ENCODE measurements at regions of chr19 and their contacts with region 1.

Region 1: GRCh38 chr19:9857920-9858746 is 23.0 kb downstream of the PIN1 start:
- DNase-seq: peak in 7 of 9 donors; percentile 19 to 64 (median 57)
- ATAC-seq: peak; percentile 82
- H3K4me3 ChIP-seq: peak overlapping the region; percentile 70
- H3K4me3 Mint-ChIP-seq: peak overlapping the region; percentile 91 to 100 (median 96)
- H3K27ac ChIP-seq: peak overlapping the region; percentile 67
- H3K27ac Mint-ChIP-seq: peak overlapping the region; percentile 94 to 99 (median 98)
- H3K4me1 ChIP-seq: peaks cover 56 to 72% of the 10 kb centered on the region in 2 donors
- H3K4me1 Mint-ChIP-seq: peaks cover 48 to 96% (median 85%) of the 10 kb centered on the region in 7 donors
- H3K27me3 ChIP-seq: no peaks in the 10 kb centered on the region
- H3K27me3 Mint-ChIP-seq: no peaks in the 10 kb centered on the region

Region 2: GRCh38 chr19:9827289-9828238 is 30.6 kb before region 1 on chr19 and contains the start of gene UBL5:
- CTCF ChIA-PET with region 1: interaction called, 4 read pairs
- POLR2A ChIA-PET with region 1: interaction called, 11 read pairs
- intact Hi-C with region 1: no loop called
- DNase-seq: peak; percentile 72 to 91 (median 89)
- ATAC-seq: peak; percentile 98
- H3K4me3 ChIP-seq: peak within 1 kb of the TSS; percentile 97
- H3K4me3 Mint-ChIP-seq: peak within 1 kb of the TSS; percentile 90 to 100 (median 99)
- H3K27ac ChIP-seq: peak within 1 kb of the TSS; percentile 87
- H3K27ac Mint-ChIP-seq: peak within 1 kb of the TSS; percentile 83 to 99 (median 98)
- H3K4me1 ChIP-seq: peaks cover 14 to 16% of the 10 kb centered on the region in 2 donors
- H3K4me1 Mint-ChIP-seq: peaks cover 15 to 45% (median 27%) of the 10 kb centered on the region in 7 donors
- H3K27me3 ChIP-seq: no peaks in the 10 kb centered on the region
- H3K27me3 Mint-ChIP-seq: no peaks in the 10 kb centered on the region
- total RNA-seq, gene UBL5: 182 to 375 (median 198) TPM

Region 3: DNA sequence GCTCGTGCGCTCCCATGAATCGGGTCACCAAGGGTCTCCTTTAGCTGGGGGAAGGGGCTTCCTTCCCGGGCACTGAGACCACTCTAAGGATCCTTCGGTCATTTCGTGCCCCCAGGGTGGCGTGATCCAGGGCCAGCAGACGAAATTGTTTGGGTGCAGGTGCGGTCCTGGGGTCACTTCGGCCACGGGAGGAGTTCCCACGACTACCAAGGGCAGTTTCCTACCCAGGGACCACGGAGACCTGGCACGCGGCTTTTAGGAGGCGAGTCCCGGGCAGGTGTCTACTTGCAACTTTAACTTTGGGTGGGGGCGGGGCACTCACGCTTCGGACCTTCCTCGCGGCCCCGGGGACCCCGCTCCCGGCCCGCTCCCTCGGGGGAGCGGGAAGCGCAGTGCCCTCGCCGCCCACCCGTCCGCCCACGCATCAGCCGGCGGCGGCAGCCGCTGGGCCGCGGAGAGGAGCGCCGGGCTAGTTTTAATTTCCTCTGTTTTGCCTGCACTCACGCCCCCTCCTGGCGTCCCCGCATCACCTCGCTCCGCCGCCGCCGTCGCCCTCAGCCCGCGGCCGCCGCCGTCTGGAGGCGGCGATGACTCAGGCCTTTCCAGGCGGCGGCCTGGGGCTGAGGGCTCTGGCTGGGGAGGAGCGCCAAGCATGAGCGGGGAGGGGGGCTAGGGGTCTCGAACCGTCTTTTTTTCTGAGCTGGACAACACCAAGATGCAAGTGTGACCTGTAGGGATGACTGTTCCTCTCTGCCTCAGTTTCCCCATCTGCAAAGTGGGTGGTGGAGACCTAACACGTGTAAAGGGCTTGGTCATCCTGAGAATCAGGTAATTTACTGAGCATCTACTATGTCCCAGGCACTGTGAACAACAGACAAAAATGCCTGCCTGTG is 56.4 kb after region 1 on chr19:
- CTCF ChIA-PET with region 1: interaction called, 7 read pairs
- POLR2A ChIA-PET with region 1: interaction called, 3 read pairs
- intact Hi-C with region 1: loop called in 1 of 2 experiments (anchors 2 kb)
- DNase-seq: peak; percentile 59 to 83 (median 72)
- ATAC-seq: peak; percentile 95
- H3K4me3 ChIP-seq: peak overlapping the region; percentile 64
- H3K4me3 Mint-ChIP-seq: peak overlapping the region; percentile 66 to 86 (median 72)
- H3K27ac ChIP-seq: no peak overlapping the region
- H3K27ac Mint-ChIP-seq: no peak overlapping the region
- H3K4me1 ChIP-seq: peaks cover 3 to 5% of the 10 kb centered on the region in 2 donors
- H3K4me1 Mint-ChIP-seq: peaks cover 6 to 12% (median 9%) of the 10 kb centered on the region in 7 donors
- H3K27me3 ChIP-seq: peaks cover 0 to 13% of the 10 kb centered on the region in 2 donors
- H3K27me3 Mint-ChIP-seq: peaks cover 22 to 33% (median 27%) of the 10 kb centered on the region in 5 donors

Region 4: GRCh38 chr19:9996541-9996940 is 138.4 kb after region 1 on chr19:
- CTCF ChIA-PET with region 1: no interaction called
- POLR2A ChIA-PET with region 1: no interaction called
- intact Hi-C with region 1: no loop called
- DNase-seq: no peak
- ATAC-seq: no peak
- H3K4me3 ChIP-seq: no peak overlapping the region
- H3K4me3 Mint-ChIP-seq: no peak overlapping the region
- H3K27ac ChIP-seq: no peak overlapping the region
- H3K27ac Mint-ChIP-seq: no peak overlapping the region
- H3K4me1 ChIP-seq: peaks cover 0 to 3% of the 10 kb centered on the region in 2 donors
- H3K4me1 Mint-ChIP-seq: peaks cover 0 to 7% (median 5%) of the 10 kb centered on the region in 7 donors
- H3K27me3 ChIP-seq: no peaks in the 10 kb centered on the region
- H3K27me3 Mint-ChIP-seq: peaks cover 5 to 34% (median 28%) of the 10 kb centered on the region in 5 donors